WTC11 (cell line): ENCODE measurements at regions of chr11 and their contacts with region 1.

Region 1: DNA sequence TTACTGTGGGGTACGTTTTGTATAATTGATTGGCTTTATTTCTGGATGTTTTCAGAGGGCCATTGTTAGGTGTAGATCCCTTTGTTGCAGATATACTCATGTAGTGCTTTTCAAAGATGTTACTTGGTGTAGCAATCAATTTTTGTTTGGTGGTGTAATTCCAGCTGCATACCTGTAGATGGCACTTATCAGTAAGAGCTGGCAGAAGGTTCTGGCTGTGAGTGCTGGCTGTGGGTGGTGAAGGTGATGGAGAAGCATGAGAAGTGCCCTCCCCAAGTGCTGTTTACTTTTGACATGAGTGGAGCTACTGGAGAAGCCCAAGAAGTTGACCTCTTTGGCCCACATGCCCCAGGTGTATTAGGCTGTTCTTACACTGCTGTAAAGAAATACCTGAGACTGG is 1074.9 kb downstream of the FAM181B start:
- DNase-seq: peak; percentile 31
- ATAC-seq: peak; percentile 91
- H3K4me3 Mint-ChIP-seq: no peak overlapping the region
- H3K27ac Mint-ChIP-seq: no peak overlapping the region
- H3K4me1 Mint-ChIP-seq: no peaks in the 10 kb centered on the region
- H3K27me3 Mint-ChIP-seq: peaks cover 19% of the 10 kb centered on the region
- CTCF ChIP-seq: peak; percentile 47; the same call in 1 of the 2 replicates

Region 2: GRCh38 chr11:81644239-81644840 is 14.4 kb before region 1 on chr11:
- CTCF ChIA-PET with region 1: interaction called, 11 read pairs
- POLR2A ChIA-PET with region 1: no interaction called
- DNase-seq: peak; percentile 12
- ATAC-seq: peak; percentile 70
- H3K4me3 Mint-ChIP-seq: no peak overlapping the region
- H3K27ac Mint-ChIP-seq: no peak overlapping the region
- H3K4me1 Mint-ChIP-seq: peaks cover 23% of the 10 kb centered on the region
- H3K27me3 Mint-ChIP-seq: peaks cover 59% of the 10 kb centered on the region
- CTCF ChIP-seq: peak; percentile 76

Region 3: DNA sequence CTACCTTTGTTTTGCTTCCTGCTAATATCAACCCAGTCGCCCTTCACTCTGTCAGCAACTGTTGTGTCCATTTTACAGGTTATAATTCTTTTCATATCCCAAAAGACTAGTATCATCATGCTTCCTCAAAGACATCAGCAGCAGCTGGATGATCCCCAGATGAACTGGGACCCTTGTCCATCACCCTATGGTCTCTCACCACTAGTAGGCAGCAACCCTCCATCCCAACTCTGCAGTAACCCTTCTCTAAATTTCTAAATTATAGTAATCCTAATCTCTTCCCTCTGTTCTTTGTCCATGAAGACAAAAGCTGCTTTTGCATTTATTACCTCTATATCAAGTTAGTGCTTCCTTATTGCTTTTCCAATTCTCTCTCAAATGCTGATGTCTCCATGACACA is 49.2 kb after region 1 on chr11:
- CTCF ChIA-PET with region 1: no interaction called
- POLR2A ChIA-PET with region 1: no interaction called
- DNase-seq: peak; percentile 28
- ATAC-seq: peak; percentile 85
- H3K4me3 Mint-ChIP-seq: no peak overlapping the region
- H3K27ac Mint-ChIP-seq: no peak overlapping the region
- H3K4me1 Mint-ChIP-seq: no peaks in the 10 kb centered on the region
- H3K27me3 Mint-ChIP-seq: no peaks in the 10 kb centered on the region
- CTCF ChIP-seq: peak; percentile 51

Region 4: DNA sequence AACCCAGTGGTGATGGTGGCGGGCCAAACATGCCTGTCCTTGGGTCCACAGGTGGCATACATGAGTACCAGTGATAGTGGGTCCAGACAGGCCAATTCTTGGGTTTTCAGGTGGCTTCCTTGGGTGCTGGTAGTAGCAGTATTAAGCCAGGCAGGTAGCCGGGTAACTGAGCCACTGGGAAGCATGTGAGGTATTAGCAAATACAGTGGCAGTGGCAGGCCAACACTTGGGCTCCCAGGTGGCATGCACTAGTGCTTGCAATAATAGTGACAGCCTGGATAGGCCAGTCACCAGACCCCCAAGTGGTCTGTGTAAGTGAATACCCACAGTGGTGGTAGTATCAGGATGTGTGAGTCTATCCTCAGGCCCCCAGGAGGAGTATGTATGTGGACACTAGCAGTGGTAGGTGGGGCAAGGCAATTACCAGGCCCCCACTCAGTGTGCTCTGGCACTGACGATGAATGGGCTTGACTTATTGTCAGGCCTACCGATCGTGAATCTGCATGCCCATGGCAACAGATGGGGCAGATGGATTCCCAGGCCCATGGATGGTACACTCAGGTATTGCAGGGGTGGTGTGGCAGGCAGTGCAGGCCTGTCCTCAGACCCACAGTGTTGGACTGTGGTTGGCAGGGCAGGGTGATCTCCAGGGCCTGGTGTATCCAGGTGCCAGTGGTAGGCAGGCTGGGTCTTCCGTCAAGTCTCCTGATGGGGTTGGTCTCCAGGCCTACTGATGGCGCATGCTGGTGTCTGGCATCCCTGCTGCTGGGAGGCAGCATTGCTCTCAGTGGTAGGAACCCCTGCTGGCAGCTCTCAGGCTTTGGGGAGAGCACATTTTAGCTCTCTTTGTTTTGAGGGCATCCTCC is 234.3 kb after region 1 on chr11:
- CTCF ChIA-PET with region 1: no interaction called
- POLR2A ChIA-PET with region 1: no interaction called
- DNase-seq: no peak
- ATAC-seq: no peak
- H3K4me3 Mint-ChIP-seq: no peak overlapping the region
- H3K27ac Mint-ChIP-seq: no peak overlapping the region
- H3K4me1 Mint-ChIP-seq: no peaks in the 10 kb centered on the region
- H3K27me3 Mint-ChIP-seq: no peaks in the 10 kb centered on the region; the same call in 1 of the 2 replicates
- CTCF ChIP-seq: no peak